WTC11 (cell line): ENCODE measurements at regions of chr19 and their contacts with region 1.

Region 1: DNA sequence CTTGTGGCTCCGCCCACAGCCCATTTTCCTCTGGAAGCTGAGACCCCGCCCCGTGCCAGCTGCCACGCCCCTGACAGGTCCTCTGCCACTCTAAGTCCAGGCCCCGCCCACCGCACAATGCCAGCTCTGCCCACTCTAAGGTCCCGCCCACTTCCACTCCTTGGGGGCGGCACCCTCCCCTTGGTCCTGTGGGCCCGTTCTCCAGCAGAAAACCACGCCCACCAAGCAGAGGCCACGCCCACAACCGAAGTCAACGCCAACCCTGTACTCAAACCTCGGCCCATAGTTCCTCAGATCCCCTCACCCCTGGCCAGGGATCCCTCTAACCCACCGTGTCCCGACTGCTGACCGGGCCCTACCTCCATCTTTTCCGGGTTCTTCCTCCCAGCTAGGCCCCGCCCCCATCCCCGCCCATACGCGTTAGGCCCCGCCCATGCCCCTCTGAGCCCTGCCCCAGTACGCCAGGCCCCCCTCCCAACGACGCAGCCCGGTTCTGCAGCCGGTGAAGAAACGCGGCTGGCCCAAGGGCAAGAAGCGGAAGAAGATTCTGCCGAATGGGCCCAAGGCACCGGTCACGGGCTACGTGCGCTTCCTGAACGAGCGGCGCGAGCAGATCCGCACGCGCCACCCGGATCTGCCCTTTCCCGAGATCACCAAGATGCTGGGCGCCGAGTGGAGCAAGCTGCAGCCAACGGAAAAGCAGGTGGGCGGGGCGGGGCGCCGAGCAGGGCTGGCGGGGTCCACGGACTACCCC is 1.3 kb downstream of the HMG20B start:
- DNase-seq: peak; percentile 100
- ATAC-seq: peak; percentile 49
- H3K4me3 Mint-ChIP-seq: peak overlapping the region; percentile 71
- H3K27ac Mint-ChIP-seq: peak overlapping the region; percentile 87
- H3K4me1 Mint-ChIP-seq: peaks cover 21% of the 10 kb centered on the region
- H3K27me3 Mint-ChIP-seq: no peaks in the 10 kb centered on the region
- CTCF ChIP-seq: no peak

Region 2: GRCh38 chr19:3526507-3527244 is 47.4 kb before region 1 on chr19:
- CTCF ChIA-PET with region 1: interaction called, 11 read pairs
- POLR2A ChIA-PET with region 1: no interaction called
- DNase-seq: no peak
- ATAC-seq: 0 out of 2 replicates have a peak, but pooled peaks have one; percentile 35
- H3K4me3 Mint-ChIP-seq: no peak overlapping the region
- H3K27ac Mint-ChIP-seq: no peak overlapping the region
- H3K4me1 Mint-ChIP-seq: no peaks in the 10 kb centered on the region
- H3K27me3 Mint-ChIP-seq: no peaks in the 10 kb centered on the region
- CTCF ChIP-seq: peak; percentile 26; the same call in 1 of the 2 replicates

Region 3: DNA sequence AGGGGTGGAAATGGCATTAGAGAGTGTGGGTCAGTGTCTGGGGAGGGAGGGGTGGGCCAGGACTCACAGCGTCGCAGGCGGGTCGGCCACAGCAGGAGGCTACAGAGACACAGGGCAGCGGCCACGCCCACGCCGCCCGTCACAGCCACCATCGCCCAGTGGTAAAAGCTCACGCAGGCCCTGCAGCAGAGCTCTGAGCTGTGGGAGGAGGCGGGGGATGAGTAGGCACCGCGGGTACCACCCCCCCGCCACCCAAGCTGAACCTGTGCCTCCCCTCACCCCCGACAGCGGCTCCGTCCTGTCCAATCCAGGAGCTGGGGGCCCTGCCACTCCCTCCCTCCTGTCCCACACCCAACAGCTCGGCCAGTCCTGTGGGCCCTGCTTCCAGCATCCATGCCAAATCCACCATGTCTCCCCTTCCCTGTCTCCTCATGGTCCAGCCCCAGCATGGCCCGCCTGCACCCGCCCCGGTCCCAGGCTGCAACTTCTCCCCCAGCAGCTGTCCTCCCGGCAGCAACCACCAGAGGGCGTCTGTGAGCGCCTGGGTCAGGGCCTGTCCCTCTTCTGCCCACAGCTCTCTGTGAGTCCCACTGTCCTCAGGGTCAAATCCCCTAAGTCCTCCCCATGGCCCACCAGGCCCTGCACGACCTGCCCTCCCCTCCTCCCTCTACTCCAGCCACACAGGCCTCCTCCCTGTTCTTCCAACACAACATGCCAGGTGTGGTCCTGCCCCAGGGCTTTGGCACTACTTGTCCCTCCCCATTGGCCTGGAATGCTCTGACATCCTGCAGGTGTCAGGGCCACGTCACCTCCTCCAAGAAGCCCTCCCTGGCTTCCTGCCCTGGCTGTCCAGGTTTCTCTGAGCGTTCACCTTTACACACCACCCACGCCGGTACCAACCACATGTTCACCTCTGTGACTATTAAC is 29.1 kb before region 1 on chr19:
- CTCF ChIA-PET with region 1: interaction called, 115 read pairs
- POLR2A ChIA-PET with region 1: interaction called, 8 read pairs
- DNase-seq: peak; percentile 93
- ATAC-seq: peak; percentile 85
- H3K4me3 Mint-ChIP-seq: no peak overlapping the region
- H3K27ac Mint-ChIP-seq: no peak overlapping the region
- H3K4me1 Mint-ChIP-seq: no peaks in the 10 kb centered on the region
- H3K27me3 Mint-ChIP-seq: no peaks in the 10 kb centered on the region
- CTCF ChIP-seq: peak; percentile 97

Region 4: GRCh38 chr19:3586124-3586626 is 12.1 kb after region 1 on chr19:
- CTCF ChIA-PET with region 1: interaction called, 44 read pairs
- POLR2A ChIA-PET with region 1: interaction called, 12 read pairs
- DNase-seq: peak; percentile 77
- ATAC-seq: peak; percentile 76
- H3K4me3 Mint-ChIP-seq: peak overlapping the region; percentile 49
- H3K27ac Mint-ChIP-seq: no peak overlapping the region
- H3K4me1 Mint-ChIP-seq: no peaks in the 10 kb centered on the region
- H3K27me3 Mint-ChIP-seq: peaks cover 52% of the 10 kb centered on the region
- CTCF ChIP-seq: peak; percentile 62; the same call in 1 of the 2 replicates

Region 5: GRCh38 chr19:3593156-3593555 is 19.1 kb after region 1 on chr19:
- CTCF ChIA-PET with region 1: interaction called, 25 read pairs
- POLR2A ChIA-PET with region 1: interaction called, 12 read pairs
- DNase-seq: peak; percentile 69
- ATAC-seq: peak; percentile 95
- H3K4me3 Mint-ChIP-seq: no peak overlapping the region
- H3K27ac Mint-ChIP-seq: no peak overlapping the region
- H3K4me1 Mint-ChIP-seq: no peaks in the 10 kb centered on the region
- H3K27me3 Mint-ChIP-seq: peaks cover 27% of the 10 kb centered on the region
- CTCF ChIP-seq: no peak

Region 6: GRCh38 chr19:3599776-3600183 is 25.7 kb after region 1 on chr19:
- CTCF ChIA-PET with region 1: interaction called, 14 read pairs
- POLR2A ChIA-PET with region 1: interaction called, 3 read pairs
- DNase-seq: peak; percentile 72
- ATAC-seq: peak; percentile 92
- H3K4me3 Mint-ChIP-seq: no peak overlapping the region
- H3K27ac Mint-ChIP-seq: no peak overlapping the region
- H3K4me1 Mint-ChIP-seq: no peaks in the 10 kb centered on the region
- H3K27me3 Mint-ChIP-seq: 0 out of 2 replicates have a peak, but pooled peaks cover 2% of the 10 kb centered on the region
- CTCF ChIP-seq: peak; percentile 43

Region 7: GRCh38 chr19:3606690-3607289 is 32.7 kb after region 1 on chr19 and contains the start of gene TBXA2R:
- CTCF ChIA-PET with region 1: interaction called, 13 read pairs
- POLR2A ChIA-PET with region 1: interaction called, 4 read pairs
- DNase-seq: peak; percentile 77
- ATAC-seq: peak; percentile 53
- H3K4me3 Mint-ChIP-seq: peak within 1 kb of the TSS; percentile 68
- H3K27ac Mint-ChIP-seq: no peak within 1 kb of the TSS
- H3K4me1 Mint-ChIP-seq: peaks cover 11% of the 10 kb centered on the region
- H3K27me3 Mint-ChIP-seq: no peaks in the 10 kb centered on the region
- CTCF ChIP-seq: no peak
- total RNA-seq, gene TBXA2R: 1.0 to 1.4 TPM (median 1.3 TPM) in 3 replicates